ENCODE measurements at regions of chr10 and their contacts with region 1.

Region 1: DNA sequence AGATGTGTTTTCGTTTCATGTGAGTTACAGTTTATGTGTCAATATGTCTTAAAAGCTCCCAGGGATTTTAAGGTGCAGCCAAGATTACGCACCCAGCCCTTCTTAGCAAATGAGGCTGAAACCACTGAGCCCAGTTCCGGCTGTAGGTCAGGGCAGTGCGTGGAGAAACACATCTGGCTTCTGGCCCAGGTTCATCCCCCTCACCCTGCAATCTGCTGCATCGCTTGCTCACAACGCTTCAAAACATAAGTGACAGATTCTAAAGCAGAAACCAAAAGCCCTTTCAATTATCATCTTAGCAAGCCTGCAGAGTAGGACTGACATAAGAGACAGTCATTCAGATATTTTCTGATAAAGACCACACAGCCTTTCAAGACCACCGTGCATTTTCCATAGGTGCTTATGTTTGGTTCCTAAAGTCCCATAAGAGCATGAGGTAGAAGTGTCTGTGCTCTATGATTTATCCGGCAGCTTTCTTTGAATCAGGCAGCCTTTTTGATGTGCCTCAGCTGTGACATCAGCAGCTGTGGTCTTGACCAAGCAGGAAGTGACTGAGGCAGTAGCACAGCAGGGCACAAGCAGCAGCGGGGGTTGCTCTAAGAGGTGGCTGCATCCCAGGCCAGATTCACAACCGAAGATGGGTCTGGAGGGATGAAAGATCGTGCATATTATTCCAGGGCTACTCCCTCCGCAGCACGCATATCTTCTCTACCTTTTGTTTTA is 72.1 kb upstream of the LYZL2 start:
- DNase-seq: peak; percentile 41 to 92 (median 74)
- ATAC-seq: peak; percentile 70
- H3K4me3 ChIP-seq: peak overlapping the region; percentile 1 to 43
- H3K4me3 Mint-ChIP-seq: peak overlapping the region; percentile 78
- H3K27ac ChIP-seq: peak overlapping the region; percentile 48 to 81
- H3K27ac Mint-ChIP-seq: peak overlapping the region; percentile 95
- H3K4me1 ChIP-seq: peaks cover 74% of the 10 kb centered on the region
- H3K4me1 Mint-ChIP-seq: peaks cover 83% of the 10 kb centered on the region
- H3K27me3 ChIP-seq: no peaks in the 10 kb centered on the region
- H3K27me3 Mint-ChIP-seq: no peaks in the 10 kb centered on the region
- CTCF ChIP-seq: no peak

Region 2: GRCh38 chr10:30348378-30348776 is 353.2 kb before region 1 on chr10:
- CTCF ChIA-PET with region 1: no interaction called
- POLR2A ChIA-PET with region 1: no interaction called
- intact Hi-C with region 1: loop called in 1 of 2 experiments (anchors 5 kb)
- DNase-seq: no peak
- ATAC-seq: peak; percentile 16
- H3K4me3 ChIP-seq: peak overlapping the region; percentile 95 to 98
- H3K4me3 Mint-ChIP-seq: peak overlapping the region; percentile 91
- H3K27ac ChIP-seq: peak overlapping the region; percentile 79 to 84
- H3K27ac Mint-ChIP-seq: peak overlapping the region; percentile 95
- H3K4me1 ChIP-seq: peaks cover 38% of the 10 kb centered on the region
- H3K4me1 Mint-ChIP-seq: peaks cover 51% of the 10 kb centered on the region
- H3K27me3 ChIP-seq: no peaks in the 10 kb centered on the region
- H3K27me3 Mint-ChIP-seq: no peaks in the 10 kb centered on the region
- CTCF ChIP-seq: no peak

Region 3: DNA sequence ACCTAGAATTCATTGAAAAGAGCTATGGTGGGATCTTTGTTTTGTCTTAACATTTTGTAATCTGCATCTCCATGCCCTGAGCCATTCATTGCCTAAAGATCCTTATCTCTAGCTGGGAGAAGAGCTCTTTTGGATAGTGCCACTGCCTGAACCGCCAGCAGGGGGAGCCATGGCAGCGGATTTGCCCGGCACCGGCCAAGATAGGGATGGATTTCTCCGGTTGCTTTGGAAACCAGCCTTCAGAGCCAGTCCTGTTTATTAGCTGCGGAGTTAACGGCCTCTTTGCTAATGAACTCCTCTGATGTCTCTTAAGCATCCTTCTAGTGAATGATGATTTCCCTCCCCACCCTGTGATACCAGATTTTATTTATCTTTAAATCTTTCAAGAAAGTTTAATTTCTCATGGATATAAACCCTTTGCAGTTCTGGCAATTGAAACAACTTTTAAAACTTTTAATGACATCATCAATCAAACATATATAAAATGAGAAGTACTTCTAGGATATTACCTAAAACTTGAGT is 13.9 kb before region 1 on chr10:
- CTCF ChIA-PET with region 1: interaction called, 32 read pairs
- POLR2A ChIA-PET with region 1: interaction called, 5 read pairs
- intact Hi-C with region 1: loop called in 1 of 2 experiments (anchors 2 kb)
- DNase-seq: peak; percentile 54 to 90 (median 78)
- ATAC-seq: peak; percentile 77
- H3K4me3 ChIP-seq: no peak overlapping the region
- H3K4me3 Mint-ChIP-seq: no peak overlapping the region
- H3K27ac ChIP-seq: no peak overlapping the region
- H3K27ac Mint-ChIP-seq: no peak overlapping the region
- H3K4me1 ChIP-seq: peaks cover 3% of the 10 kb centered on the region
- H3K4me1 Mint-ChIP-seq: peaks cover 3% of the 10 kb centered on the region
- H3K27me3 ChIP-seq: peaks cover 0 to 5% of the 10 kb centered on the region in 2 experiments
- H3K27me3 Mint-ChIP-seq: peaks cover 23% of the 10 kb centered on the region
- CTCF ChIP-seq: peak; percentile 97

Region 4: GRCh38 chr10:31928549-31929260 is 1227.1 kb after region 1 on chr10 and contains the start of gene ARHGAP12:
- CTCF ChIA-PET with region 1: no interaction called
- POLR2A ChIA-PET with region 1: no interaction called
- intact Hi-C with region 1: loop called (anchors 1 to 10 kb)
- DNase-seq: peak; percentile 70 to 92 (median 84)
- ATAC-seq: peak; percentile 67
- H3K4me3 ChIP-seq: peak within 1 kb of the TSS; percentile 90 to 95
- H3K4me3 Mint-ChIP-seq: peak within 1 kb of the TSS; percentile 94
- H3K27ac ChIP-seq: peak within 1 kb of the TSS; percentile 65 to 87
- H3K27ac Mint-ChIP-seq: peak within 1 kb of the TSS; percentile 83
- H3K4me1 ChIP-seq: peaks cover 41% of the 10 kb centered on the region
- H3K4me1 Mint-ChIP-seq: peaks cover 49% of the 10 kb centered on the region
- H3K27me3 ChIP-seq: no peaks in the 10 kb centered on the region
- H3K27me3 Mint-ChIP-seq: no peaks in the 10 kb centered on the region
- CTCF ChIP-seq: no peak
- total RNA-seq, gene ARHGAP12: 15.7 to 15.9 TPM

Region 5: DNA sequence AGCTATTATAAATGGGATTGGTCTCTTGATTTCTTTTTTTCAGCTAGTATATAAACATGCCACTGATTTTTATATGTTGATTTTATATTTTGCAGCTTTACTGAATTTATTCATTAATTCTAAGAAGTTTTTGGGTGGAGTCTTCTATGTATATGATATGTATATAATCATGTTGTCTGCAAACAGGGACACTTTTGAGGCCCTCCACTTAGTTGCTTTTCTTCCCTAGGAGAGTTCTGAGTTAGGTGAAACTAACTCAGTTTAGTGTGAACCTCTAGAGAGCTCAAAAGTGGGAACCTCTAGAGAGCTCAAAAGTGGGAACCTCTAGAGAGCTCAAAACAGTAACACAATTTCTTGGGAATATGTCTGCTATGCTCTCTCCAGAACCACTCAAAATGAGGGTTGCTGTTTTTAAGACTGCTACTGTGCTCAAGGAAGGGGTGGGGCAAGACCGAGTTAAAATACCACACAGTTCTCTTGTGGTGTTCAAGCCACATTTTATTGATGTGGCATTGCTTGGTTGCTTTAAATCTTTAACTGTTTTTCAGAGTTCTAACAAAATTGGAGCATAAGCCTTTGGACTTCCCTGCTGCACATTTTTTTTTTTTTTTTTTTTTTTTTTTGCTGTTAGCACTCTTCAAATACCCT is 1757.6 kb after region 1 on chr10:
- CTCF ChIA-PET with region 1: no interaction called
- POLR2A ChIA-PET with region 1: no interaction called
- intact Hi-C with region 1: loop called in 1 of 2 experiments (anchors 10 kb)
- DNase-seq: peak; percentile 13 to 89 (median 55)
- ATAC-seq: peak; percentile 97
- H3K4me3 ChIP-seq: peak overlapping the region in 1 of 2 experiments; percentile 31
- H3K4me3 Mint-ChIP-seq: peak overlapping the region; percentile 44
- H3K27ac ChIP-seq: peak overlapping the region; percentile 28 to 40
- H3K27ac Mint-ChIP-seq: peak overlapping the region; percentile 88
- H3K4me1 ChIP-seq: peaks cover 41% of the 10 kb centered on the region
- H3K4me1 Mint-ChIP-seq: peaks cover 49% of the 10 kb centered on the region
- H3K27me3 ChIP-seq: no peaks in the 10 kb centered on the region
- H3K27me3 Mint-ChIP-seq: no peaks in the 10 kb centered on the region
- CTCF ChIP-seq: no peak